ENCODE measurements at regions of chr20 and their contacts with region 1.

Region 1: GRCh38 chr20:51595058-51595532 is 52.6 kb upstream of the NFATC2 start:
- DNase-seq: peak; percentile 88
- ATAC-seq: peak; percentile 100
- H3K4me3 Mint-ChIP-seq: no peak overlapping the region
- H3K27ac Mint-ChIP-seq: peak overlapping the region; percentile 72
- H3K4me1 Mint-ChIP-seq: peaks cover 35% of the 10 kb centered on the region
- H3K27me3 Mint-ChIP-seq: peaks cover 4% of the 10 kb centered on the region

Region 2: GRCh38 chr20:50987592-50988210 is 607.4 kb before region 1 on chr20:
- CTCF ChIA-PET with region 1: interaction called, 20 read pairs
- POLR2A ChIA-PET with region 1: no interaction called
- DNase-seq: peak; percentile 77
- ATAC-seq: peak; percentile 85
- H3K4me3 Mint-ChIP-seq: no peak overlapping the region
- H3K27ac Mint-ChIP-seq: no peak overlapping the region
- H3K4me1 Mint-ChIP-seq: no peaks in the 10 kb centered on the region
- H3K27me3 Mint-ChIP-seq: peaks cover 13% of the 10 kb centered on the region

Region 3: DNA sequence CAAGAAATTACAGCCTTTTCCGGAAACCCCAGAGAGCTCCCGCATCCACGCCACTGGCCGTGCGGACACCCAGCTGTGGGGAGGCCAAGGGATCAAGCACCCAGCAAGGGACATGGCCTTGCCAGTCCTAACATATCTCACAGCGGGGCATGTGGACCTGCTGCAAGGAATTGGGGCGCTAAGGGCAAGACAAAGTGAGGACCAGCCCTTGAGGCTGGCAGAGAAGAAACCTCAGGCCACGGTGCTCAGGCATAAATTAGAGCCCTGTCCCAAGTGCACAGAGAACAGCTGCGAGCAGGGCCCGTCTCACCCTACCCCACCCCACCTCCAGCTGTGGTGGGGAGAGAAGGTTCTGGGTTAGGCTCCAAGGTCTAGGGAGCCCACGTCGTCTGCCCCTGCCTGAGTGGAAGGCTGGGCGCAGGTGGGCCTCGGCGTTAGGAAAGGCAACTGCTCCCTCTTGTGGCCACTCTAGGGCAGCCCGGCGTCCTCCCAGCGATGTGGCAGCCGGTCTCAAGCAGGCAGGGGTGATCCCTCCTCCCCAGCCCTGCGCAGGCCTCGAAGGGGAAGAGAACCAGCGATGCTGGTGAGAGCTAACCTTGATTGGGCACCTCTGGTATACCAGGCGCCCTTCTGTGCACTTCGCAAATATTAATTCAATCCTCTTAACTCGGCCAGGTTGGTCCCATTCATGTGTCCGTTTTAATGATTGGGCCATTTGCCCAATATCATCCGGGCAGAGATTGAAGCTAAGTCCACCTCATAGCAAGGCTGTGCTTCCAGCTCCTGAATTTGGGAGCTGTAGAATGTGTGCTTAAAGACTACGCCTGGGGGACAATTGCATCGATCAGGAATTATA is 288.4 kb before region 1 on chr20:
- CTCF ChIA-PET with region 1: interaction called, 12 read pairs
- POLR2A ChIA-PET with region 1: no interaction called
- DNase-seq: peak; percentile 77
- ATAC-seq: peak; percentile 99
- H3K4me3 Mint-ChIP-seq: no peak overlapping the region
- H3K27ac Mint-ChIP-seq: no peak overlapping the region
- H3K4me1 Mint-ChIP-seq: peaks cover 3% of the 10 kb centered on the region
- H3K27me3 Mint-ChIP-seq: peaks cover 16% of the 10 kb centered on the region

Region 4: DNA sequence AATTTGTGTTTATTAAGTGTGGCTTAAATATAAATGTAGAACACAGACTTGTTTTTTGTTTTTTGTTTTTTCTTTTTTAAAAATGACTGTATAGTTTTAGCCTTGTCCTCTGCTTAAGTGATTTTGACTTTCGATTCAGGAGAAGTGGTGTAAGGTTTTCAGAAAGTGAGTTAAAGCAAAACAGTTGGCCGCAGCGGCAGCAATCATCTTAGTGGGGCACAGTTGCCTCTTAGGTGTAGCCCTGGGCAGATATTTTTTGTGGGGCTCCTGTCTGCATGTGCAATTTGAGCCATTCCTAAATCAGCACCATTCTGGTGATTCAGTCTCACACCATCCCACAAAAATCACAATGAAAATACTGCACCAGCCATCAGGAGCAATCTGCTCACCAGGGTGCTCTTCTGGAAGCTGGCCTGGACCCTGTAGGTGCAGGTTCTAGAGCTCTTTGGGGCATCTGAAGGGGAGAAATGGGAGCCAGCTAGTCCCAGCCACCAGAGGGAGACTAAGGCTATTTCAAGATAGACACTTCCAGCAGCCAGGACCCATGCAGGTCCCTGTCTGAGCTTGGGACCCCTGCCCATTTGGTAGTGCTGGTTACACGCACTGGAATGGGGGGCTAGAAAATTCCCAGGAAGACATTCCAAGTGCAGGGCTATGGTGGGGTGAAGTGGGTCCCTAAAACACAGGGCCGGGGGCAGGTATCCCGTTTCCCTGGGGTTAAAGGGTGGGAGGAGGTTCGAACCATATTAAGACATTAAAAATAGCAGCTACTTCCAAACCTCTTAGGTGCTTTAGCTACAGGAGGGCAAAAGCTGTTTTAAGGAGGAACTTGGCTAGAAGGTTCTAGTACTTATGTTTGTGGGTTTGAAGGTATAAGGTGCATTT is 209.2 kb before region 1 on chr20:
- CTCF ChIA-PET with region 1: interaction called, 89 read pairs
- POLR2A ChIA-PET with region 1: interaction called, 3 read pairs
- DNase-seq: peak; percentile 54
- ATAC-seq: peak; percentile 54
- H3K4me3 Mint-ChIP-seq: no peak overlapping the region
- H3K27ac Mint-ChIP-seq: peak overlapping the region; percentile 58
- H3K4me1 Mint-ChIP-seq: peaks cover 69% of the 10 kb centered on the region
- H3K27me3 Mint-ChIP-seq: no peaks in the 10 kb centered on the region

Region 5: GRCh38 chr20:51500311-51500710 is 94.8 kb before region 1 on chr20:
- CTCF ChIA-PET with region 1: interaction called, 11 read pairs
- POLR2A ChIA-PET with region 1: no interaction called
- DNase-seq: peak; percentile 81
- ATAC-seq: peak; percentile 89
- H3K4me3 Mint-ChIP-seq: no peak overlapping the region
- H3K27ac Mint-ChIP-seq: peak overlapping the region; percentile 73
- H3K4me1 Mint-ChIP-seq: peaks cover 88% of the 10 kb centered on the region
- H3K27me3 Mint-ChIP-seq: no peaks in the 10 kb centered on the region

Region 6: DNA sequence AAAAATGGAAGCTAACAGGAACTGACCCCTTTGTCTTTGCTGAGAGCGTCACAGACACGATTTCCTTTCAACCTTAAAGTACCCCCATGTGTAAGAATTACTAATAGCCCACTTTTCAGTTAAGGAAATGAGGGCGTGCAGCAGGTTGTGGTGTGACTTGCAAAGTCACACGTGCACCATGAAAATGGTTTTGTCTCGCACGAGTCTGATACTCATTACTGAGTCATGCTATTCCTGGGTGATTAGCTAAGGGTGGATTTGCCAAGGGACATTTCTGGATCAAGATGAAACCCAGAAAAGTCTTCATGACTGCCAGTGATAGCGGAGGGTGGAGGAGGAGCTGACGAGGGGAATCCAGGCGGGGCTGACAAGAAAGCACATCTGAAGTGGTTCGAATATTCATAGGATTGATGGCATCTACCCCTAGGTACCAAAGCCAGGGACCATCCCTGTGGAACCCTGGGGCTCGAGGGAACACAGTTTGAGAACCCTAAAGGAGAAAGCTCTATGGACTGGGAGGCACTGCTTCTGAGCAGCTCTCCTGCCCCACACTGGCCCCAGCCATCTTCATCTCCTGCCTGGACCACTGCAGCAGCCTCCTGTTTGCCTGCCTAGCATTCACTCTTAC is 40.4 kb before region 1 on chr20:
- CTCF ChIA-PET with region 1: interaction called, 10 read pairs
- POLR2A ChIA-PET with region 1: no interaction called
- DNase-seq: no peak
- ATAC-seq: no peak
- H3K4me3 Mint-ChIP-seq: no peak overlapping the region
- H3K27ac Mint-ChIP-seq: no peak overlapping the region
- H3K4me1 Mint-ChIP-seq: peaks cover 16% of the 10 kb centered on the region
- H3K27me3 Mint-ChIP-seq: peaks cover 9% of the 10 kb centered on the region

Region 7: DNA sequence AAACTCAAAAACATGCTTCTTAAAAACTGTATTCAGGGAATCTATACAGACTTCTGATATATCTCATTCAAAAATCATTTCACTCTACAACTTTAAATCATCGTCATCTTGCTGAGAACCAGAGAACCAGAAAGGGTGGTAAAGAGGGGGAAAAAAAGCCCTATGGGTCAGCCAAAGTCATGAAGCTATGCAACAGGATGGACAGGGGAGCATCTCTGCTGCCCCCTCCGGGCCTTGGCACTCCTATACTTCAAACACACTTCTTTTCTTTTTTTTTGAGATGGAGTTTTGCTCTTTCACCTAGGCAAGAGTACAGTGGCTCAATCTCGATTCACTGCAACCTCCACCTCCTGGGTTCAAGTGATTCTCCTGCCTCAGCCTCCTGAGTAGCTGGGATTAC is 21.0 kb after region 1 on chr20:
- CTCF ChIA-PET with region 1: interaction called, 12 read pairs
- POLR2A ChIA-PET with region 1: no interaction called
- DNase-seq: no peak
- ATAC-seq: no peak
- H3K4me3 Mint-ChIP-seq: no peak overlapping the region
- H3K27ac Mint-ChIP-seq: no peak overlapping the region
- H3K4me1 Mint-ChIP-seq: no peaks in the 10 kb centered on the region
- H3K27me3 Mint-ChIP-seq: peaks cover 11% of the 10 kb centered on the region

Region 8: DNA sequence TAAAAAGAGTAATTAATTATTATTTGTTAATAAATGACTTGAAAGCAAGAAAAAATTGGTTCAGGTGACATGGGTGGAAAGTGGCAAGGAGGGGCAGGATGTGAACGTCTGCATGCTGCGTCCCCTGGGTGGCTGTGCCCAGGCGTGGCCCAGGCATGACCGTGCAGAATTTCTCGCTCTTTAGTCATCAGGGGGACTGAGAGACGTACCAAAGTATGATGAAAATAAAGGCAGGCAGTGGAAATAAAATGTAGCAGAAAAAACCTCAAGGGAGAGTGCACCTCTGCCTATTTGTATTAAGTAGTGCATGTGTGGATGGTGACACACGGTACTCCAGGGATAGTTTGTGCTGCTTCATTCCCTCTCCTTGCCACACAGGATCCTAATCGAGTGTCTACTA is 92.0 kb after region 1 on chr20:
- CTCF ChIA-PET with region 1: no interaction called
- POLR2A ChIA-PET with region 1: no interaction called
- DNase-seq: no peak
- ATAC-seq: no peak
- H3K4me3 Mint-ChIP-seq: no peak overlapping the region
- H3K27ac Mint-ChIP-seq: no peak overlapping the region
- H3K4me1 Mint-ChIP-seq: no peaks in the 10 kb centered on the region
- H3K27me3 Mint-ChIP-seq: peaks cover 2% of the 10 kb centered on the region